Activated naive CD4-positive, alpha-beta T cell treated with anti-CD3 and anti-CD28 coated beads, Interleukin-2, amount 10 ng/mL, durations not matched to agents 7 days and 5 days (primary cell): ENCODE measurements at regions of chr1 and their contacts with region 1.

Region 1: DNA sequence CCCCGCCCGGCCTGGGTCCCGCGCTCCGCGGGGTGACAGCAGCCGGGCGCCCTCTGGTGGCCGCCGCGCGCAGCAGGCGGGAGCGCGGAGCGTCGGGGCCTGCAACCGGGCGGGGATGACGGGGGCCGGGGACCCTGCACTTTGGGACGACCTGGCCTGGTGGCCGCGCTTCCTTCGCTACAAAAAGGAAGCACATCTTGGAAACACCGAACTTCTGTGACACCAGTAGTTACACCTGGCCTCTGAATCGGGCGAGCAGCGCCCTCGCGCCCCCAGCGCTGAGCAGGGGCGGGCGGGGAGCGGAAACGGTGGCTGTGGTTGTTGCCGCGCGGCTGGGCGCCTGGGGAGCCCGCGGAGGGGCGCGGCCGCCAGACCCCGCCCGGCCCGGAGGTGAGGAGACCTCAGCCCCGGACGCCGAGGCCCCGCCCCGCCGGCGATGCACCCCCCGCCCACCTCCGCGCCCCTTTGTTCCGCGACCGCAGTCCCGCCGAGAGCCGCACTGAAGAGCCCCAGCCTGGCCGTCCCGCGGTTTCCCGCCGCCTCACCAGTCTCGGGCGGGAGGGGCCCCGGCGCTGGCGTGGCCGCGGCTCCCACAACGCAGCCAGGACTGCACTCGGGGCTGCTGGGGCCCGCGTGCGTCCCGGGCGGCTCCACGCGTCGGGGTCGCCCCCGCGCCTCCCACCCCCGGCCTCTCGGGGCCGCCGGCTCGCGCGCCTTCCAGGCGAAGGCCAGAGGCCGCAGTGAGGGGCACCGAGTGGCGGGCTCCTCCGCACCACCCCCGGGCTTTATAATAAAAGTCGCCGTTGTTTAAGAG is 59.3 kb downstream of the H3-3A start:
- DNase-seq: peak; percentile 84
- H3K4me3 Mint-ChIP-seq: peak overlapping the region; percentile 73
- H3K27ac Mint-ChIP-seq: peak overlapping the region; percentile 90
- H3K4me1 Mint-ChIP-seq: peaks cover 54% of the 10 kb centered on the region
- H3K27me3 Mint-ChIP-seq: peaks cover 32% of the 10 kb centered on the region

Region 2: GRCh38 chr1:226109829-226110248 is 12.0 kb before region 1 on chr1:
- CTCF ChIA-PET with region 1: interaction called, 16 read pairs
- DNase-seq: peak; percentile 89
- H3K4me3 Mint-ChIP-seq: peak overlapping the region; percentile 86
- H3K27ac Mint-ChIP-seq: peak overlapping the region; percentile 90
- H3K4me1 Mint-ChIP-seq: peaks cover 18% of the 10 kb centered on the region
- H3K27me3 Mint-ChIP-seq: peaks cover 38% of the 10 kb centered on the region

Region 3: GRCh38 chr1:226186124-226187018 is 64.6 kb after region 1 on chr1 and contains the start of gene ACBD3:
- CTCF ChIA-PET with region 1: interaction called, 16 read pairs
- DNase-seq: peak; percentile 92
- H3K4me3 Mint-ChIP-seq: peak within 1 kb of the TSS; percentile 97
- H3K27ac Mint-ChIP-seq: peak within 1 kb of the TSS; percentile 95
- H3K4me1 Mint-ChIP-seq: peaks cover 39% of the 10 kb centered on the region
- H3K27me3 Mint-ChIP-seq: no peaks in the 10 kb centered on the region

Region 4: DNA sequence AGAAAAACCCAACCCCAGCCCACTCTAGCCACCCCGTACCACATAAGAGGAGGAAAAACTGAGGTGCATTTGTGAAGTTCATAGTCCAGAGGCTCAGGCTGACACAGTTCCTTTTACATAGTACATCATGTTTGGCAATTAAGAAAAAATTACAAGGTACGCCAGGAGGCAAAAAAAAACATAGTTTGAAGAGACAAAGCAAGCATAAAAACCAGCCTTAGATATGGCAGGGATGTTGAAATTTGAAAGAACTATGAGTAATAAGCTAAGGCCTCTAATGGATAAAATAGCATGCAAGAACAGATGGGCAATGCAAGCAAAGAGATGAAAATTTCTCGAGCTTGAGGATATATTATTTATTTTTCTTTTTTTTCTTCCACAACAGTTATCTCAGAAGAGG is 133.6 kb after region 1 on chr1:
- CTCF ChIA-PET with region 1: no interaction called
- DNase-seq: no peak
- H3K4me3 Mint-ChIP-seq: no peak overlapping the region
- H3K27ac Mint-ChIP-seq: no peak overlapping the region
- H3K4me1 Mint-ChIP-seq: no peaks in the 10 kb centered on the region
- H3K27me3 Mint-ChIP-seq: no peaks in the 10 kb centered on the region

Region 5: GRCh38 chr1:226308723-226309315 is 187.0 kb after region 1 on chr1 and contains the start of gene LIN9:
- CTCF ChIA-PET with region 1: interaction called, 10 read pairs
- DNase-seq: peak; percentile 96
- H3K4me3 Mint-ChIP-seq: peak within 1 kb of the TSS; percentile 89
- H3K27ac Mint-ChIP-seq: peak within 1 kb of the TSS; percentile 89
- H3K4me1 Mint-ChIP-seq: peaks cover 36% of the 10 kb centered on the region
- H3K27me3 Mint-ChIP-seq: peaks cover 30% of the 10 kb centered on the region

Region 6: GRCh38 chr1:226332947-226333346 is 211.2 kb after region 1 on chr1:
- CTCF ChIA-PET with region 1: interaction called, 41 read pairs
- DNase-seq: peak; percentile 30
- H3K4me3 Mint-ChIP-seq: no peak overlapping the region
- H3K27ac Mint-ChIP-seq: no peak overlapping the region
- H3K4me1 Mint-ChIP-seq: peaks cover 11% of the 10 kb centered on the region
- H3K27me3 Mint-ChIP-seq: peaks cover 3% of the 10 kb centered on the region